Activated T-helper 2 cell treated with anti-CD3 and anti-CD28 coated beads, Interferon-gamma antibody, Interleukin-2, Interleukin-4, amounts not matched to agents 10 μg/mL and 5 μg/mL and 100 μg/mL, durations not matched to agents 14 hours and 24 hours and 36 hours (primary cell): ENCODE measurements at regions of chr2 and their contacts with region 1.

Region 1: GRCh38 chr2:32010670-32011484 is at the start of gene MEMO1:
- DNase-seq: peak; percentile 92
- H3K4me3 Mint-ChIP-seq: peak within 1 kb of the TSS; percentile 85
- H3K27ac Mint-ChIP-seq: peak within 1 kb of the TSS; percentile 93
- H3K4me1 Mint-ChIP-seq: peaks cover 34% of the 10 kb centered on the region
- H3K27me3 Mint-ChIP-seq: no peaks in the 10 kb centered on the region
- total RNA-seq, gene MEMO1: 63.7 and 64.8 TPM in 2 replicates

Region 2: DNA sequence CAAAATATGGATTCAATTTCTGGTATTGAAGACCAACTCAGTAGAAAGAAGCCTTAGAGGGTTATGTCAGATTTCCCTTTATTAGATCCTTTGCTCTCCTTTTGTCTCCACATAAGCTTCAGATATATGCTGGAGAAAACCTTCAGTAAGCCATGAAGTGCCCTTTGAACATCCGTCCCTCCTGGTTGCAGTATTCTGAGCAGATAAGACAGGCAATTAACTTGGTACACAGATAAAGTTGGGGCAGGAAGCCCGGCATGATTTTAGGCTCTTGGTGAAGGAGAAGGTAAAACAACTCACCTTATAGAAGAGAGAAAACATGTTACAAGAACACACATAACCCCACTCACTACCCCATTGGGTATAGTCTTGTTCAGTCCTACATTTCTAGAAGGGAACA is 506.6 kb before region 1 on chr2:
- intact Hi-C with region 1: no loop called
- DNase-seq: no peak
- H3K4me3 Mint-ChIP-seq: no peak overlapping the region
- H3K27ac Mint-ChIP-seq: no peak overlapping the region
- H3K4me1 Mint-ChIP-seq: no peaks in the 10 kb centered on the region
- H3K27me3 Mint-ChIP-seq: peaks cover 7% of the 10 kb centered on the region

Region 3: DNA sequence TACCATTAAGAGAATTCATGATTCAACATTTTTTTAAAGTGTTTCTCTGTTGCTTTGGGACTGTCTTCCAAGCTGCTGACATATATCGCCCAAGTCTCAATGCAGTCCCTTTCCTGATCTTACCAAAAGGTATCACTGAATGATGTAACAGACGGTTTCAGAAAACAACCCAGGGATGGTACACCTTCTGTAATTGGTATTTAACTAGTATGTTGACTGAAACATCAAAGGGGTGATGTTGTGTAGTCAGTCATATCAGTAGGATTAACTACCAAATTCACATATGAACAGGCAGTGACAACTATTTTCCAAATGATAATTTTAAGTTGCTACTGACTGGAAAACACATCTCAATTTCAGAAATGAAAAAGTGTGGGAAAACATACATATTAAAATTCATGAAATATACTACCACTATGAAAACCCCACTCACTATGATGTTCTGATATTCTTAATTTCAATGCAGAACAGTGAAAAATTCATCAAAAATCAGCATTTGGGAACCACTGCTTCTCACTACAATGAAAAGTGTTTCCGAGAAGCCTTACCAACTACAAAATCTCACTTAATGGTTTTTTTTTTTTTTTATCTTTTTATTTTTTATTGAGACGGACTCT is 59.8 kb before region 1 on chr2:
- intact Hi-C with region 1: loop called (anchors 5 kb)
- DNase-seq: no peak
- H3K4me3 Mint-ChIP-seq: no peak overlapping the region
- H3K27ac Mint-ChIP-seq: no peak overlapping the region
- H3K4me1 Mint-ChIP-seq: peaks cover 16% of the 10 kb centered on the region
- H3K27me3 Mint-ChIP-seq: no peaks in the 10 kb centered on the region

Region 4: DNA sequence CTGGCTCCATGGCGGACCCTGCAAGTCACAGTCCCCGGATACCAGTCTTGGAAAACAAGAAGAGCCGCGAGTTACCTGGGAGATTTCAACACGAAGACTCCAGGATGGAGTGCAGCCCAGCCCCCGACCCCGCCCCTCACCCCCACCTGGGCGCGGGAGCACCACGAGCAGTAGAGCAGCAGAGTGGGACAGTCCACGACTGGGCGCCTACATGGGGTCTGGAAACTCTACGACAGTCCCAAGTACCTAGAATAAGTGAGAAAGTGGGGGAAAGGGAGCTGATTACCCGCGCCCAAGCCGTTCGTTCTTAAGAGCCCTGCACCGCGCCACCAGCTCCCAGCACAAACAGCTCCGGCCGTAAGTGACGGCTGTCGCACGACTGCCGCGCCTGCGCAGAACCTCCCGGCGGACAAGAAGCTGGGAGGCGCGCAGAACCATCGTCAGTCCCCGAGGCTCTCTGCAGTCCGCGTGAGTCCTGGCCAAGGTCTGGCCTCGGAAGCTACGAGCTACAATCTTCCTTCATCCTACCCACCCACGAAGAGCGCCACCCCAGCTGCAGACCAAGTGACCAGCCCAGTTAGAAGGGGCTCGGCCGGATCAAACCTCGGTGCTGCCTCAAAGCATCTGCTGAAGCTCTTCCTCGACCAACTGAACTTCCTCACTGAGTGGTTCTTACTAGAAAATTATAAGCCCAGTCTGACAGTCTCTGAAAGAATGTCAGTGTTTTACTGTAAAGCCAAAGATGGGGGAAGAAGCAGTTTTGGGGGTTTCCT is 28.8 kb after region 1 on chr2 and contains the start of gene DPY30:
- intact Hi-C with region 1: loop called (anchors 1 kb)
- DNase-seq: peak; percentile 88
- H3K4me3 Mint-ChIP-seq: peak within 1 kb of the TSS; percentile 83
- H3K27ac Mint-ChIP-seq: peak within 1 kb of the TSS; percentile 83
- H3K4me1 Mint-ChIP-seq: peaks cover 7% of the 10 kb centered on the region
- H3K27me3 Mint-ChIP-seq: no peaks in the 10 kb centered on the region
- total RNA-seq, gene DPY30: 72.1 and 77.1 TPM in 2 replicates

Region 5: GRCh38 chr2:32051836-32052439 is 41.1 kb after region 1 on chr2:
- intact Hi-C with region 1: no loop called
- DNase-seq: no peak
- H3K4me3 Mint-ChIP-seq: no peak overlapping the region
- H3K27ac Mint-ChIP-seq: no peak overlapping the region
- H3K4me1 Mint-ChIP-seq: no peaks in the 10 kb centered on the region
- H3K27me3 Mint-ChIP-seq: no peaks in the 10 kb centered on the region

Region 6: DNA sequence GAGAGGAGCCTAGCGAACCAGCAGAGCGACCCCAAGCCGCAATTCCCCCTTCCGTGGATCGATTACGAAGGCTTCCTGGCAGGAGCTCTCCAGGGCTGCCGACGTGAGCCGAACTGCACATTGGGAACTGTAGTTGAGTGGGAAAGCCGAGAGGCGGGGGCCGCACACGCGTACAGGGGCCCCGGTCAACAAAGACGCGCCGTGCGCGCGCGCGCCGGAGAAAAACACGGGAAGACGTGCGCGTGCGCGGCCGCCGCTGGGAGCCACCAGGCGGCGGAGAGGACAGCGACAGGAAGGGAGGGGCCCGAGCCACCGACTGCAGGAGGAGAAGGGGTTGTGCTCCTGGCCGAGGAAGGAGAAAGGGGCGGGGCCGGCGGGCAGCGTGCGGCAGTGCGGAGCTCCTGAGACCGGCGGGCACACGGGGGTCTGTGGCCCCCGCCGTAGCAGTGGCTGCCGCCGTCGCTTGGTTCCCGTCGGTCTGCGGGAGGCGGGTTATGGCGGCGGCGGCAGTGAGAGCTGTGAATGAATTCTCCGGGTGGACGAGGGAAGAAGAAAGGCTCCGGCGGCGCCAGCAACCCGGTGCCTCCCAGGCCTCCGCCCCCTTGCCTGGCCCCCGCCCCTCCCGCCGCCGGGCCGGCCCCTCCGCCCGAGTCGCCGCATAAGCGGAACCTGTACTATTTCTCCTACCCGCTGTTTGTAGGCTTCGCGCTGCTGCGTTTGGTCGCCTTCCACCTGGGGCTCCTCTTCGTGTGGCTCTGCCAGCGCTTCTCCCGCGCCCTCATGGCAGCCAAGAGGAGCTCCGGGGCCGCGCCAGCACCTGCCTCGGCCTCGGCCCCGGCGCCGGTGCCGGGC is 52.7 kb after region 1 on chr2 and contains the start of gene SPAST:
- intact Hi-C with region 1: loop called (anchors 1 kb)
- DNase-seq: peak; percentile 95
- H3K4me3 Mint-ChIP-seq: peak within 1 kb of the TSS; percentile 96
- H3K27ac Mint-ChIP-seq: peak within 1 kb of the TSS; percentile 89
- H3K4me1 Mint-ChIP-seq: peaks cover 18% of the 10 kb centered on the region
- H3K27me3 Mint-ChIP-seq: no peaks in the 10 kb centered on the region
- total RNA-seq, gene SPAST: 18.4 and 18.5 TPM in 2 replicates

Region 7: DNA sequence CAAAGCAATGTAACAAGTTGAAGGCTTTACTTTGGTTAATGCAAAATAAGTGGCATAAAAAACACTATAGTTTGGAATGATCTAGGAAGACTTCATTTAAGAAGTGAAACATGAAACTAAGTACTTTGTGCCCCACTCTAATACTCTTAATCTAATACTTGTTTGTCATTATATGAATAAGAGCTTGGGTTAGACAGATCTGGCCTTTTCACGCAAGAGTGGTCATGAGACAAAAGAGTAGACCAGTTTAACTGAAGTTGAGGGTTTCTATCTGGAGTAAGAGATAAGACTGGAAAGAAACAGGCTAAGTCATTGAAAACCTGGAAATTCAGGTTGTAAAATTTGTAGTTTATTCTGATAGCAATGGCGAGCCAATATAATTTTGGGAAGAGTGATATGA is 157.6 kb after region 1 on chr2:
- intact Hi-C with region 1: loop called (anchors 1 kb)
- DNase-seq: no peak
- H3K4me3 Mint-ChIP-seq: no peak overlapping the region
- H3K27ac Mint-ChIP-seq: no peak overlapping the region
- H3K4me1 Mint-ChIP-seq: peaks cover 36% of the 10 kb centered on the region
- H3K27me3 Mint-ChIP-seq: no peaks in the 10 kb centered on the region

Region 8: DNA sequence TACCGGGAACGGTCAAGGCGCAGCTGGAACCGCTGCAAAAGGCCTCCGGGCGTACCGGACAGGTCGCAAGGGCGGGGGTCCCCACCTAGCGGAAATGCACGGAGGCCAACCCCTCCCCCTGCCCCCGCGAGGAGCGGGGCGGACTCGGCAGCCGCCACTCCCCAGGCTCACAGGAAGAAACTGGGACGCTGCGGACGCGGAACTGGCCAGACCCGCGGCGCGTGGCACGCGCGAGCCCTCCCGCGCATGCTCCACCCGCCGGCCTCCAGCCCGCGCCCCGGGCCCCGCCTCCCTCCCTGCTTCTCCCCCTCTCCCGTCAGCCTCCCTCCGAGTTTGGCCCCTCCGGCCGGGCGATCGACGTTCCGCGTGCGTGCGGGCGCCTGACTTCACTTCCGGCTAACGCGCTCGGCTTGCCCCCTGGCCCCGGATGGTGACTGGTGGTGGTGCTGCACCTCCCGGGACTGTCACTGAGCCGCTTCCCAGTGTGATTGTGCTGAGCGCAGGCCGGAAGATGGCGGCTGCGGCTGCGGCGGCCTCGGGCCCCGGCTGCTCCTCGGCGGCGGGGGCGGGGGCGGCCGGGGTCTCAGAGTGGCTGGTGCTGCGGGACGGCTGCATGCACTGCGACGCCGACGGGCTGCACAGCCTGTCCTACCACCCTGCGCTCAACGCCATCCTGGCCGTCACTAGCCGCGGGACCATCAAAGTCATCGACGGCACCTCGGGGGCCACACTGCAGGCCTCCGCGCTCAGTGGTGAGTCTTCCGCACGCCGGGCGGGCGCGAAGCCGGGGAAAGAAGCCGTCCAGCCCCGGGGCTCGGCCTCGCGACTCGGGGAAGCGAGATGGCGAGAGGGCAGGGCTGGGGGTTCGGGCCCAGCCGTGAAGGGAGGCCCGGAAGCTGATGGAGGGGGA is 346.1 kb after region 1 on chr2 and contains the start of gene BIRC6:
- intact Hi-C with region 1: loop called (anchors 10 kb)
- DNase-seq: peak; percentile 94
- H3K4me3 Mint-ChIP-seq: peak within 1 kb of the TSS; percentile 89
- H3K27ac Mint-ChIP-seq: peak within 1 kb of the TSS; percentile 92
- H3K4me1 Mint-ChIP-seq: peaks cover 34% of the 10 kb centered on the region
- H3K27me3 Mint-ChIP-seq: no peaks in the 10 kb centered on the region
- total RNA-seq, gene BIRC6: 111 and 123 TPM in 2 replicates